OCI-LY7 (cell line): ENCODE measurements at regions of chrX and their contacts with region 1.

Region 1: GRCh38 chrX:153539171-153539978 is 21.9 kb downstream of the ATP2B3 start:
- DNase-seq: peak; percentile 39
- H3K4me3 ChIP-seq: no peak overlapping the region
- H3K27ac ChIP-seq: no peak overlapping the region
- H3K4me1 ChIP-seq: no peaks in the 10 kb centered on the region
- CTCF ChIP-seq: peak; percentile 77

Region 2: GRCh38 chrX:153649178-153649914 is 110.0 kb after region 1 on chrX:
- CTCF ChIA-PET with region 1: no interaction called
- POLR2A ChIA-PET with region 1: no interaction called
- intact Hi-C with region 1: loop called (anchors 1 kb)
- DNase-seq: peak; percentile 51
- H3K4me3 ChIP-seq: no peak overlapping the region
- H3K27ac ChIP-seq: no peak overlapping the region
- H3K4me1 ChIP-seq: no peaks in the 10 kb centered on the region
- CTCF ChIP-seq: peak; percentile 61

Region 3: GRCh38 chrX:153667956-153668396 is 128.6 kb after region 1 on chrX:
- CTCF ChIA-PET with region 1: interaction called, 3 read pairs
- POLR2A ChIA-PET with region 1: no interaction called
- intact Hi-C with region 1: loop called (anchors 1 kb)
- DNase-seq: peak; percentile 56
- H3K4me3 ChIP-seq: no peak overlapping the region
- H3K27ac ChIP-seq: no peak overlapping the region
- H3K4me1 ChIP-seq: no peaks in the 10 kb centered on the region
- CTCF ChIP-seq: peak; percentile 82